Esophagus squamous epithelium (tissue), 5 donors: ENCODE measurements at regions of chr3 and their contacts with region 1.

Region 1: DNA sequence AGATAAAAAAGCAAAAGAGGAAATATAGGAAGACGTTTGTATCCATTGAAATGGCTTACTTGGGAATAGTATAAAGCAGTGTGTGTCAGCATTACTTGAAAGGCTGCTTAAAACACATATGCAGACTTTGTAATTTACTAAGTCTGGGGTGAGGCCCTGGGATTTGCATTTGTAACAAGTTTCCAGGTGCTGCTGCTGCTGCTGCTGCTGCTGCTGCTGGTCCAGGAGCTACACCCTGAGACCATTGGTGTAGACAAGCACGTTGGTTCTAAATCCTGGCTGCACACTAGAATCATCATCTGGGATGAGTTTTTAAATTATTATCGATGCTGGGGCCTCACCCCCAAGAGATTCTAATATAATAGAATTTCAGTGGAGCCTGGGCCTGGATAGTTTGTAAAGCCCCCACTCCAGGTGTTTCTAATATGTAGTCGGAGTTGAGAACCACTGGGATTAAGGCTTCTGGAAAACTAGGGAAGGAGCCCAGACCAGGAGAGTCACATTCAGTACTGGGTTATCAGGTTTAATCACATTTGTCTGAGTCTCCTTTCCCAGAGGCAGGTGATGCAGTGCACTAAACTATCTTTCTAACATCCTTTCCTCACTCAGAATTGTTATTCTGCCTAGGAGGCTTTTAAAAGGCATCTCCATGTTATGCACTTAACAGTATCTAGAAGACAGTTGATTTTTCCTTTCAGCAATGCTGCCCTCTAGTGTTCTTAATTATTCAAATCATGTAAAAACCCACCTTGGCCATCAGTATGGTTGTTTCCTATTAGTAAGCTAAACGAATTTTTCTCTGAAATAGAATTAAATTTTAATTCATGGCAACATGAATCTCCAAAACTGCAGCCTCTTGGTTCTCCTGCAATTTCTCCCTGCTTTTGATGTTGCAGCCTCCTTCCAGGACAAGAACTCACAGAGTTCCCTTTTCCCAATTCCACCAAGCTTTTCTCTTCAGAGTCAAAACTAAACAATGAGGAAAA is 45.4 kb downstream of the SSR3 start:
- DNase-seq: no peak
- H3K4me3 ChIP-seq: no peak overlapping the region
- H3K27ac ChIP-seq: no peak overlapping the region
- H3K4me1 ChIP-seq: no peaks in the 10 kb centered on the region
- H3K27me3 ChIP-seq: no peaks in the 10 kb centered on the region
- CTCF ChIP-seq: peak; percentile 51 to 73 (median 56)
- POLR2A ChIP-seq: no peak

Region 2: GRCh38 chr3:156098437-156099035 is 410.9 kb before region 1 on chr3:
- intact Hi-C with region 1: no loop called
- DNase-seq: no peak
- H3K4me3 ChIP-seq: no peak overlapping the region
- H3K27ac ChIP-seq: no peak overlapping the region
- H3K4me1 ChIP-seq: no peaks in the 10 kb centered on the region
- H3K27me3 ChIP-seq: no peaks in the 10 kb centered on the region
- CTCF ChIP-seq: no peak
- POLR2A ChIP-seq: no peak

Region 3: GRCh38 chr3:156148946-156149381 is 360.5 kb before region 1 on chr3:
- intact Hi-C with region 1: loop called (anchors 5 kb)
- DNase-seq: no peak
- H3K4me3 ChIP-seq: no peak overlapping the region
- H3K27ac ChIP-seq: peak overlapping the region in 3 of 4 donors; percentile 45 to 66 (median 47)
- H3K4me1 ChIP-seq: peaks cover 0 to 19% (median 0%) of the 10 kb centered on the region in 3 donors
- H3K27me3 ChIP-seq: peaks cover 0 to 10% (median 0%) of the 10 kb centered on the region in 4 donors
- CTCF ChIP-seq: no peak
- POLR2A ChIP-seq: no peak

Region 4: DNA sequence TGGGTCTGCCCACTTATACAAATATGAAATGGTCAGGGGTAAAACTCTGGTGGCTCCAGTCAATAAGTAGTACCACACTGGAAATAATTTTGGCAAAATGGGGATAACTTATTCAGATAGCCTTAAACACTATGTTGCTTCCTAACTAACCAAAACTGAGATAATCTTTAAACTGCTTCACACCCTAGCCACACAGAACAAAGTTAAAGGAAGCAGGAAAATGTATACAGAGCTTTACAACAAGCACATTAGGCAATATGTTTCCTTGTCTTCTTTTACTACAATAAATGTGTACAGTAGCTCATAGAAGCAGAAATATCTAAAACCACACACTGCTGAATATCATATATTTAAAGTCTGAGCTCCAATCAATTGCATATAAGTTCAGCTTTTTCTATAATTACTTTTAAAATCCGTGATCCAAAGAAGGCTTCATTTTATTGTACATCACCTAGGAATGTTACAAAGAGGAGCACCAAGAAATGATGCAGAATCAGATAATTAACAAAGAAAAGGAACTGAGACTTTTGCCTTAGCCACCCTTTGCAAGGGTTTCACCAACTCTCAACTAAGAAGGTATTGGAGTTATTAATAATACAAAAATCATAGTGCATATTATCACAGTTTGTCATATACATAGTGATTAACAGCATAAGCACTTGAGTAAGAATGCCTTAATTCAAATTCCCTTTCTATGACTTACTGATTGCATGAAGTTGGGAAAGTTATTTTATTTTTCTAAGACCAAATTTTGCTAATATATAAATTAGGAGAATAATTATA is 54.6 kb after region 1 on chr3:
- intact Hi-C with region 1: no loop called
- DNase-seq: no peak
- H3K4me3 ChIP-seq: no peak overlapping the region
- H3K27ac ChIP-seq: no peak overlapping the region
- H3K4me1 ChIP-seq: no peaks in the 10 kb centered on the region
- H3K27me3 ChIP-seq: no peaks in the 10 kb centered on the region
- CTCF ChIP-seq: no peak
- POLR2A ChIP-seq: no peak